PC-9 (cell line): ENCODE measurements at regions of chr13 and their contacts with region 1.

Region 1: DNA sequence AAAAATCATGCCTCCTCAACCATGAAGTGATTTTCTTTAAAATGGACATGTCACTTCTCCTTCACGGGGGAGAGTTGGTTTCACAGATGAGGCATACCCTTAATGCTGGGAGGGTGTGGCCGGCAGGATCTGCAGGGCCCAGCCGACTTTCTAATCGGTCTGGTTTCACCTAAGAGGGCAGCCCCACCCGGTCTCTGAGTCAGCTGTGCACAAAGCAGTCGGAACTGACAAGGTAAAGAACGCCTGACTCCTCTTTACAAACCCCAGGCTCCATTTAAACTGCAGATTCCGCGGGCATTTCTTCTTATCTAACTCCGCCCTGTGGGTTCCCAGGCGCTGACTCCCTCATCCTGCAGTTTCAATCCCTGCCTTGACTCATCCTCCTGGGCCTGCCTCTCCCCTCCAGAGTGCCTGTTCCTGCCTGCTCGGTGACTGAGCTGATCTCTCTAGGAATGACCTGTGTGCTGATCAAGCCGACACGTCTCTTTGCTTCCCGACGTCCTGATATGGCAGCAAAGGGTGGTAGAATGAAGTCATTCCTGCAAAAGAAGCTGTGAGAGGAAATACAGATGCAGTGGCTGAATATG is 63.4 kb downstream of the EFNB2 start:
- DNase-seq: peak; percentile 88 to 99
- H3K4me3 ChIP-seq: peak overlapping the region; percentile 41; the same call in 1 of the 2 replicates
- H3K27ac ChIP-seq: peak overlapping the region; percentile 91
- H3K4me1 ChIP-seq: peaks cover 31% of the 10 kb centered on the region
- H3K27me3 ChIP-seq: no peaks in the 10 kb centered on the region
- CTCF ChIP-seq: no peak

Region 2: DNA sequence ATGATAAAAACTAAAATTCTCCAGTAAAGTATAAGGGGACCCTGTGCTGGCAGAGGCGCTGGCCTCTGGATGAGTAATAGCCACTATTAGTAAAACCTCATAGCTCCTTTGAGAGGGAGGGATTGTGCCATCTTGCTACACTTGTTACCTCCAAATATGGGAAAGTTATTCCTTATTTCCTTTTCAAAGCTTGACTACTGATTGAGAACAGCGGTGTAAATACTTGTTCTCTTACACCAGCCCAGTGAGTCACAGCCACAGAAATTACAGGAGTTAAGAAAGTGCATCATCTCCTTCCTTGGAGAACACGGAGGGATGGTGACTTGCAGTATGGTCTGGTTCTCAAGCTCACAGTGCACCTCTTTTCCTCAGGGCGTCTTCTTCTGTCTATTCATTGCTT is 315.6 kb before region 1 on chr13:
- CTCF ChIA-PET with region 1: no interaction called
- POLR2A ChIA-PET with region 1: no interaction called
- intact Hi-C with region 1: loop called (anchors 1 kb)
- DNase-seq: peak; percentile 52 to 99
- H3K4me3 ChIP-seq: 0 out of 2 replicates have a peak overlapping the region, but pooled peaks have one; percentile 1
- H3K27ac ChIP-seq: peak overlapping the region; percentile 96
- H3K4me1 ChIP-seq: peaks cover 43% of the 10 kb centered on the region
- H3K27me3 ChIP-seq: no peaks in the 10 kb centered on the region
- CTCF ChIP-seq: no peak

Region 3: GRCh38 chr13:106349080-106349931 is 122.7 kb before region 1 on chr13:
- CTCF ChIA-PET with region 1: no interaction called
- POLR2A ChIA-PET with region 1: no interaction called
- intact Hi-C with region 1: loop called (anchors 1 kb)
- DNase-seq: peak; percentile 59 to 91
- H3K4me3 ChIP-seq: peak overlapping the region; percentile 52
- H3K27ac ChIP-seq: peak overlapping the region; percentile 84
- H3K4me1 ChIP-seq: peaks cover 40% of the 10 kb centered on the region
- H3K27me3 ChIP-seq: no peaks in the 10 kb centered on the region
- CTCF ChIP-seq: no peak

Region 4: DNA sequence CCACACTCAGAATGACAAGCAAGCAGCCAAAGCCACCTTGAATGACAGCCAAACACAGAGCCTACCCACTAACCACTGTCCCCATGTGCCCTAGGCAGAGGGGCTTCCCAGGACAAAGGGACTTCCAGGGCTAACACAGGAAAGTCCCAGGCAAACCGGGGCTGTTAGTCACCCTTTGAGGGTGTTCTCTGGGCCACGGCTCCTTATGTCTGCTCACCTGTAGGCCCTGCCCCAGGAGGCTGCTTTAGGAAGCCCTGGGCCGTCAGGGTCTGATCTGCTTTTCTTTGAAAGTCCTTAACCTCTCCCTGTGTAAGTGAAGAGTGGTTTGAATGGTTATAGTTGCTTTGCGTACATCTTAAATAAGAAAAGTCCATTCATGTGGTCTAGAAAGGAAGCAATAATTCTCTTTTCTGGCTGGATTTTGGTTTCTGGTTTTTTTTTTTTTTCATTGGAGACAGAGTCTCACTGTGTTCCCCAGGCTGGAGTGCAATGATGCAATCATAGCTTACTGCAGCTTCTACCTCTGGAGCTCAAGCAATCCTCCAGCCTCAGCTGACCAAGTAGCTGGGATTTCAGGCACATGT is 98.0 kb before region 1 on chr13:
- CTCF ChIA-PET with region 1: no interaction called
- POLR2A ChIA-PET with region 1: interaction called, 3 read pairs
- intact Hi-C with region 1: loop called (anchors 1 kb)
- DNase-seq: no peak
- H3K4me3 ChIP-seq: no peak overlapping the region
- H3K27ac ChIP-seq: no peak overlapping the region
- H3K4me1 ChIP-seq: peaks cover 21% of the 10 kb centered on the region
- H3K27me3 ChIP-seq: no peaks in the 10 kb centered on the region
- CTCF ChIP-seq: no peak

Region 5: DNA sequence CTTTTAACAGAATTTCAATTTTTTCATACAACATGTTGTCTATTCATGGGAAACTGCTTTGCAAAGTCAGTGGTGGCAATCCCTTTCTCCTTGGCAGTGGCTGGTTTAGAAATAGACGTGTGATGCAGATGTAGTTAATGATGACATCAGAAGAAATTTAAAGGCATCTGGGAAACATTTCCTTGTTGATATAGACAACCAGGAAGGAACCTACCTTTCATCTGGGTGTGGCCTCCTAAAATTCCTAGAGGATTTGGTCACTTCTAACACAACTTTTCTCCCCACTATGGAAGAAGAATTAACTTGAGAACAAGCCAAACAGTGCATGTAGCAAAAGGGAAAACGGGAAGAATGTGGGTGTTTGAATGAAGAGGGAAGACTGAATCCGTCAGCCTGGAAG is 39.4 kb before region 1 on chr13:
- CTCF ChIA-PET with region 1: no interaction called
- POLR2A ChIA-PET with region 1: no interaction called
- intact Hi-C with region 1: loop called (anchors 2 kb)
- DNase-seq: peak; percentile 19 to 97
- H3K4me3 ChIP-seq: peak overlapping the region; percentile 1; the same call in 1 of the 2 replicates
- H3K27ac ChIP-seq: peak overlapping the region; percentile 92
- H3K4me1 ChIP-seq: peaks cover 21% of the 10 kb centered on the region
- H3K27me3 ChIP-seq: no peaks in the 10 kb centered on the region
- CTCF ChIP-seq: no peak

Region 6: DNA sequence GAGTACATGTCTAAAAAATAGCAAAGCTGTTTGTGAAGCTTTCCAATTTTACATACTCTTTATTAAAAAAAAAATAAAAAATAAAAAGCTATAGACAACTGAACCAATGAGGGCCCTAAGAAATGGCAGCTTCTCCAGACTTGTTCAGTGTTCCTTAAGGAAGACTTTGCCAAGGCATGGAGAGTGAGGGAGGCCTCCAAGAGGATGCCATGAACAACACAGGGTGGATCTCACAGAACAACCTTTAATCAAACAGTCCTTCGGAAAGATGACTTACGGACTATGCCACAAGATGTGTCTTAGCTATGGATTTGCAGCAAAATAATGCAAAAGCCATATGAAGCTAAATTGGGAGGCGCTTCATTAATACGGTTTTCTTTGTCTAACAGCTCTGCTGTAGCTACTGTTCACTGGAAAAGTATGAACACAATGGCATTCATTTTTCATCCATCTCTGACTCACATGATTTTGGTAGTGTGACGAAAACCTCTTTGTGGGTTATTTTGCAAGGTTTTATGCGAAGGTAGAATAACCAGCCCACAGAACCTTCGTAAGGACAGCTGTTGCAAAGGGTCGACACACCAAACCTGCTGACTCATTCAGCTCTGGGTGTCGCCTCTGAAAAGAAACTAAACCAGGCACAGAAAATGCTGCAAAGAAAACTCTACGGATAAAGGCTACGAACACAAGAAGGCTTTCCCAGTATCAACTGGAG is 35.7 kb after region 1 on chr13:
- CTCF ChIA-PET with region 1: no interaction called
- POLR2A ChIA-PET with region 1: interaction called, 4 read pairs
- intact Hi-C with region 1: loop called (anchors 5 kb)
- DNase-seq: peak; percentile 59 to 89
- H3K4me3 ChIP-seq: peak overlapping the region; percentile 41; the same call in 1 of the 2 replicates
- H3K27ac ChIP-seq: peak overlapping the region; percentile 84
- H3K4me1 ChIP-seq: peaks cover 28% of the 10 kb centered on the region
- H3K27me3 ChIP-seq: no peaks in the 10 kb centered on the region
- CTCF ChIP-seq: no peak

Region 7: GRCh38 chr13:106530171-106530851 is 58.3 kb after region 1 on chr13:
- CTCF ChIA-PET with region 1: no interaction called
- POLR2A ChIA-PET with region 1: no interaction called
- intact Hi-C with region 1: loop called (anchors 2 kb)
- DNase-seq: peak; percentile 43 to 92
- H3K4me3 ChIP-seq: peak overlapping the region; percentile 72
- H3K27ac ChIP-seq: peak overlapping the region; percentile 83
- H3K4me1 ChIP-seq: peaks cover 53% of the 10 kb centered on the region
- H3K27me3 ChIP-seq: no peaks in the 10 kb centered on the region
- CTCF ChIP-seq: no peak